K562 (cell line): ENCODE measurements at regions of chr3 and their contacts with region 1.

Region 1: DNA sequence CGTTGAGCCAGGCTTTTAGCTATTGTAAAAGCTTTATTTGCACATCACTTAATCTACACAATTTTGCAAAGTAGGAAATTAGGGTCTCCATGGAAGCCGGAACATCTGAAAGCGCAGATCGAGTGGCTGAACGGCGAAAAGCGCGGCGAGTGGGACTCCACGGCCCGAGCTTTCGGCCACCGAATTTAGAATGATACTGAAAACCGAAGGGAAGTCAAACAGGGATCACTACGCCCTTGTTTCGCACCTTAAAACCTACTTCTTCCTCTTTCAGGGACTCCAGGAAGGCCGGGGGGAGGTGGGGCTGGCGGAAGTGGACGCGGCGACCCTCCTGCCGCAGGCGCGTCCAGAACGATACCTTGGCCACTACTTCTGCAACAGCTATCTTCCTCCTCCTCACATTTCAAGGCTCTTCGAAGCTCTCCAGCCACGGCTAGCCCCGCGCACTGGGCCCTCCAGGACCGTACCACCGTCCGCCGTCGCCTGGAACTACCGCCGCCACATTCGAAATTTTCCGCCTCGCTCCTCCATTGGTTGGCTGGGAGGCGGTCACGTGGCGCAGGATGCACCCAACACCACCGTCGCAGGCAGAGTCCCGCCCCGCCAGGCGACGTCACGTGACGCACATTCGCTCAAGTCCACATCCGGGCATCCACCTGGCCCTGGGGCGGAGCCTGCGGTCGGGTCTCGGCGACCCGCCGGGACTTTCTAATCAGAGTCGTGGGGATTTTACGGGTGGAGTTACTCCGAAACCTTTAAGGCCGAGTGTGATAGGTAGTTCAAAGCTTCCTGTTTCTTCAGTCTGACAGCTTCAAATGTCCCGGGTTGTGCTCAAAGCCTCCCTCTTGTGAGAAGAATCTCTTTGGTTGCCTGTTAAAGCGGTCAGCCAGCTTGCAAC is at the start of gene SGO1:
- DNase-seq: peak; percentile 98 to 100 (median 99)
- ATAC-seq: peak; percentile 94
- H3K4me3 ChIP-seq: peak within 1 kb of the TSS; percentile 61
- H3K27ac ChIP-seq: peak within 1 kb of the TSS; percentile 94
- H3K4me1 ChIP-seq: peaks cover 0 to 8% of the 10 kb centered on the region in 2 experiments; a peak in 2 of 5 replicates
- H3K27me3 ChIP-seq: no peaks in the 10 kb centered on the region
- CTCF ChIP-seq: no peak
- EP300 ChIP-seq: peak; percentile 9
- POLR2A ChIP-seq: peak; percentile 95
- RAD21 ChIP-seq: 0 out of 4 replicates have a peak, but pooled peaks of 1 of the 2 experiments have one; percentile 6
- polyA plus RNA-seq, gene SGO1: 13.7 to 17.0 TPM

Region 2: DNA sequence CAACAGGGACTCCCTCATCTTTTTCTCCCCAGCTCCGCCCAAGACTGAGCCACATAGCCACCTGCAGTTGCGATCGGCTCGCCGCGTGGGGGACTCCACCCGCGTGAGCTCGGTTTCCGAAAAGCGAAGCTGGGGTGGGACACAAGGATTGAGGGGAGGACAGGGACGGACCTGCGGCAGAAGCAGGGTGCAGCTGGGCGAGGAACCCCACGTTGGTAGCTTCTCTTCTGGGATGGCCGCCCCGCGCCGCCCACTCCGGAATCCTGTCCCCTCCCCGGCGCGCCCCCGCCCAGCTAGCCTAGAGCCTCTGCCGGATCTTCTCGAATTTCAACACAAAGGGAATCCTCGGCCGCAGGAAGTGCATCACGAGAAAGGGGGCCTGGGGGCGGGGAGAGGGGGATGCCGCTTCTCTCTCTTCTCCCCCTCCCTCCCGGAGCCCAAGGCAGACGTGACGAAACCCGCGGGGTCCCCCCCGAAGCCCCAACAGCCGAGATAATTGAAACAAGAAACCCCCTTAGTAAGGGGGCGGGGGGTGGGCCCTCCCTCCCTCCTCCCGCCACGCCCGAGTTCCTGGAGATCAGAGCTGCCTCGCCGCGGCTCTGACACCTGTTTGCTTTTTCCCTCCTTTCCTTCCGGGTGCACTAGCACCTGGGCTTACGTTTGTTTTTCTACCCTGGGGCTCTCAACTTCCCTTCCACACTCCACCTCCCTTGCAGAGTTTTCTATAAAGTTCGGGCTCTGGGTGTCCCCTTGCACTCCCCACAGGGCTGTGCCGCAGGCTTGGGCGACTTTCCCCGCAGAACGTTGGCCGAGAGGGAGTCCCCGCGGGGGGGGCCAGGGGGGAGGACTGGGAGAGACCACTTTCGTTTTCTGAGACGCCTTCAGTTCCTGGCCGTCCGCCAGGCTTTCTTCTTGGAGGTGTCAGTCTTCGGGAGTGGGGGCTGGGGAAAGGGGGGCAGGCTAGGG is 1039.0 kb before region 1 on chr3:
- CTCF ChIA-PET with region 1: no interaction called
- POLR2A ChIA-PET with region 1: no interaction called
- in situ Hi-C with region 1: no loop called
- intact Hi-C with region 1: loop called (anchors 5 kb)
- DNase-seq: peak; percentile 60 to 76 (median 68)
- ATAC-seq: peak; percentile 96
- H3K4me3 ChIP-seq: peak overlapping the region; percentile 51
- H3K27ac ChIP-seq: 0 out of 3 replicates have a peak overlapping the region, but pooled peaks have one; percentile 15
- H3K4me1 ChIP-seq: peaks cover 0 to 16% of the 10 kb centered on the region in 2 experiments; a peak in 2 of 5 replicates
- H3K27me3 ChIP-seq: no peaks in the 10 kb centered on the region
- CTCF ChIP-seq: peak; percentile 13 to 45 (median 41); a peak in 2 of 6 replicates
- EP300 ChIP-seq: no peak
- POLR2A ChIP-seq: no peak
- RAD21 ChIP-seq: peak in 1 of 2 experiments; percentile 27; a peak in 1 of 4 replicates

Region 3: DNA sequence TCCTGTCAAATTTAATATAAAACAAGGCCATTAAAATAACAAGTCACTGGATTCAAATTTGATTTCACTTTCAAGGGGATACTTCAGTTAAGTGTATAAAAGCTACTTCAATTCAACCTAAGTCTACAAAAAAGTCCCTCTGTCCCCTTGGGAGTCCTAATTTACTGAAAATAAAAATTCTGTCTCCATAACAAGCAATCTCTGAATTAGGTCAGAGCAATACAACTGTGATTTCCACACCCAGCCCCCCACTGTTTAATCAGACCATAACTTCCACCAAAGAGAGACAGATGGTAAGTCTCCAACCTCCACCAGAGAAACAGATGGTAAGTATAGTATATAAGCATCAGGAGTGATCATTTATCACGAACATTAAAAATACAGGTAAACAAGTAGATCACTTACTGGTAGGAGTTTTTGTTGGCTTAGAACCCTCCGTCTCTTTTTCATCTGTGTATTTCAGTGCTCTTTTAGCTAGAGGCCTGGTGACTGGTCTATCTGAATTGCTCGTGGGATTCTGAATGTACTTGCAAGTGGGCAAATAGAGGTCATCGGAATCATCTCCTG is 12.0 kb before region 1 on chr3:
- CTCF ChIA-PET with region 1: no interaction called
- POLR2A ChIA-PET with region 1: interaction called, 15 read pairs
- in situ Hi-C with region 1: no loop called
- intact Hi-C with region 1: no loop called
- DNase-seq: no peak
- ATAC-seq: no peak
- H3K4me3 ChIP-seq: no peak overlapping the region
- H3K27ac ChIP-seq: no peak overlapping the region
- H3K4me1 ChIP-seq: no peaks in the 10 kb centered on the region
- H3K27me3 ChIP-seq: no peaks in the 10 kb centered on the region
- CTCF ChIP-seq: no peak
- EP300 ChIP-seq: no peak
- POLR2A ChIP-seq: no peak
- RAD21 ChIP-seq: no peak

Region 4: DNA sequence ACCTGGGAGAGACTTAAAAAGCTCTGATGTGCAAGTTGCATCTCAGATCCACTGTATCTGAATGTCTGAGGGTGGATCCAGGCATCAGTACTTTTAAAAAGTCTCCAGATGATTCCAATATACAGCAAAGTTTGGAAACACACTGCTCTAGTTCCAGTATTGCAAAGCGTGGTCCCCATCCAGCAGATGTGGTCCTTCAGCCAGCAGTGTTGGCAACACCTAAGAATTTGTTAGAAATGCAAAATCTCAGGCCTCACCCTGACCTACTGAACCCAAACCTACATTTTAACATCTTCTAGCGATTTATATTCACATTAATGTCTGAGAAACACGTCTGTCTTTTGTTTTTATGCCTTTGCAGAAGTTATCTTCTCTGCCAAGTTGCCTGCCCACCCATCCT is 32.3 kb after region 1 on chr3:
- CTCF ChIA-PET with region 1: no interaction called
- POLR2A ChIA-PET with region 1: no interaction called
- in situ Hi-C with region 1: no loop called
- intact Hi-C with region 1: loop called (anchors 1 kb)
- DNase-seq: no peak
- ATAC-seq: no peak
- H3K4me3 ChIP-seq: no peak overlapping the region
- H3K27ac ChIP-seq: no peak overlapping the region
- H3K4me1 ChIP-seq: no peaks in the 10 kb centered on the region
- H3K27me3 ChIP-seq: no peaks in the 10 kb centered on the region
- CTCF ChIP-seq: no peak
- EP300 ChIP-seq: no peak
- POLR2A ChIP-seq: no peak
- RAD21 ChIP-seq: no peak

Region 5: GRCh38 chr3:20324714-20325478 is 138.9 kb after region 1 on chr3:
- CTCF ChIA-PET with region 1: no interaction called
- POLR2A ChIA-PET with region 1: no interaction called
- in situ Hi-C with region 1: no loop called
- intact Hi-C with region 1: loop called (anchors 5 kb)
- DNase-seq: peak in 1 of 4 experiments; percentile 68
- ATAC-seq: peak; percentile 54
- H3K4me3 ChIP-seq: no peak overlapping the region
- H3K27ac ChIP-seq: peak overlapping the region; percentile 76
- H3K4me1 ChIP-seq: peaks cover 16 to 62% of the 10 kb centered on the region in 2 experiments
- H3K27me3 ChIP-seq: no peaks in the 10 kb centered on the region
- CTCF ChIP-seq: no peak
- EP300 ChIP-seq: peak; percentile 72
- POLR2A ChIP-seq: no peak
- RAD21 ChIP-seq: no peak